Head of caudate nucleus (tissue), 42 donors: ENCODE measurements at regions of chr1 and their contacts with region 1.

Region 1: DNA sequence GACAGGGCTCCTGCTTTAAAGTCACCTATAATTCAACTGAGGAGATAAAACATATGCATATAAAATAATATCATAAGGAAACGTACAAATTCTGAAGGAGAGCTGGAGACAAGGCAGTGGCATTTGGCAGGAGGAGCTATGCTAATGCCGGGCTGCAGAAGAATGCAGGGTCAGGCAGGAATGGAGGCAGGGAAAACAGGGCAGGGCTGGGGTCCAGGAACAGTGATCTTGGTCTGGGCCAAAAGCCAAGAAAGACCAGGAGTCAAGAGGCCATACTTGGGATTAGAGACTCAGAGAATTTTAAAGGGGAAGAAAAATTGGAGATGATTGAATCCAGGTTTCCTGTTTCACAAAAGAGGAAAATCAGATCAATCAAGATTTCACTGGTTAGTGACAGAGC is 20.0 kb upstream of the BRDT start:
- DNase-seq: peak in 2 of 42 donors; percentile 8 to 33

Region 2: GRCh38 chr1:91282695-91283420 is 646.4 kb before region 1 on chr1:
- intact Hi-C with region 1: loop called (anchors 5 kb)
- DNase-seq: peak in 41 of 42 donors; percentile 16 to 89 (median 66)

Region 3: DNA sequence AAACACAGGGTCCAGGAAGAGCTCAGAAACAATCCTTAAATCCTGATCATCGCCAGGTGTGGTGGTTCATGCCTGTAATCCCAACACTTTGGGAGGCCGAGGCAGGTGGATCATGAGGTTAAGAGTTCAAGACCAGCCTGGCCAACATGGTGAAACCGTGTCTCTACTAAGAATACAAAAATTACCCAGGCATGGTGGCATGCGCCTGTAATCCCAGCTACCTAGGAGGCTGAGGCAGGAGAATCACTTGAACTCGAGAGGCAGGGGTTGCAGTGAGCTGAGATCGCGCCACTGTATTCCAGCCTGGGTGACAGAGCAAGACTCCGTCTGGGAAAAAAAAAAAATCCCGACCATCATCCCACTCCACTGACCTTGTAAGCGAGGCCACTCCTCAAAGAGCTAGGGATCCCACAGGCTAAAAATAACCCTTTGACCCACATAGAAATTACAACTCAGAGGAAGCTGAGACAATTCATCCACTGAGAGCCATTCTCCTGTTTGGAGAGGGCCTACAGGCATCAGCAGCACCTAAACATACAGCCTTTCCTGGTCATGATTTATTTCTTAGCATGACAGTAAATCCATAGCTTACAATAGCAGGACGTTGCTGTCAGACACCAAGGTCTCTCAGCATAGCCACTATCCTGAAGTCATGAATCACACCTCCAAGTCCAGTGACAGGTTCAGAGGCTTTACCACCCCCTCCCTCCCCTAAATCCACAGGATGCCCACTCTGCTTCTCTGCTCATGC is 110.0 kb before region 1 on chr1:
- intact Hi-C with region 1: no loop called
- DNase-seq: no peak

Region 4: DNA sequence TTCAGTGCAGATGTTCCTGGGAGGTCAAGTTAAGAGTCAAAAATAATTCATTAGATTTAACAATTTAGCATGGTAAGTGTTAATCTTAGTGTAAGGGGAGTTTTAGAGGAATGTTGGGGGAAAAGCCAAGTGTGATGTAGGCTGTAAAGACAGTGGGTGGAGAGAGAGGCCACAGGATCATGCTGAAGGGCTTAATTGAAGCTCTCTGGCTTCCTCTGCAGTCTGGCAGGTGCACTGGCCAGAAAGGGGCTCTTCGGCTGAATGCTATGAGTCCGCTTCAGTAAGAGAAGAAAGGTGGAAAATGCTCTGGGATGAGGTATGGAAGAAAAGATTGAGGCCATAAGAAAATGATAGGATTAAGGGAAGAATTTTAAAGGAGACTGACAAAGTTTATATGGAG is 22.9 kb after region 1 on chr1:
- intact Hi-C with region 1: no loop called
- DNase-seq: no peak